CD8-positive, alpha-beta memory T cell (primary cell): ENCODE measurements at regions of chr5 and their contacts with region 1.

Region 1: GRCh38 chr5:65672796-65673195 is 48.0 kb downstream of the SHLD3 start:
- DNase-seq: no peak
- H3K4me3 ChIP-seq: no peak overlapping the region
- H3K4me3 Mint-ChIP-seq: no peak overlapping the region
- H3K27ac ChIP-seq: no peak overlapping the region
- H3K27ac Mint-ChIP-seq: peak overlapping the region in 5 of 8 donors; percentile 27 to 54 (median 39)
- H3K4me1 ChIP-seq: peaks cover 5% of the 10 kb centered on the region
- H3K4me1 Mint-ChIP-seq: peaks cover 19 to 23% (median 21%) of the 10 kb centered on the region in 3 donors
- H3K27me3 ChIP-seq: no peaks in the 10 kb centered on the region
- H3K27me3 Mint-ChIP-seq: no peaks in the 10 kb centered on the region

Region 2: GRCh38 chr5:65184780-65185179 is 488.0 kb before region 1 on chr5:
- CTCF ChIA-PET with region 1: no interaction called
- POLR2A ChIA-PET with region 1: no interaction called
- DNase-seq: no peak
- H3K4me3 ChIP-seq: no peak overlapping the region
- H3K4me3 Mint-ChIP-seq: no peak overlapping the region
- H3K27ac ChIP-seq: no peak overlapping the region
- H3K27ac Mint-ChIP-seq: no peak overlapping the region
- H3K4me1 ChIP-seq: no peaks in the 10 kb centered on the region
- H3K4me1 Mint-ChIP-seq: peaks cover 0 to 3% (median 0%) of the 10 kb centered on the region in 3 donors
- H3K27me3 ChIP-seq: no peaks in the 10 kb centered on the region
- H3K27me3 Mint-ChIP-seq: no peaks in the 10 kb centered on the region

Region 3: GRCh38 chr5:65651144-65651543 is 21.7 kb before region 1 on chr5:
- CTCF ChIA-PET with region 1: no interaction called
- POLR2A ChIA-PET with region 1: interaction called, 11 read pairs
- DNase-seq: no peak
- H3K4me3 ChIP-seq: no peak overlapping the region
- H3K4me3 Mint-ChIP-seq: no peak overlapping the region
- H3K27ac ChIP-seq: no peak overlapping the region
- H3K27ac Mint-ChIP-seq: no peak overlapping the region
- H3K4me1 ChIP-seq: no peaks in the 10 kb centered on the region
- H3K4me1 Mint-ChIP-seq: no peaks in the 10 kb centered on the region
- H3K27me3 ChIP-seq: no peaks in the 10 kb centered on the region
- H3K27me3 Mint-ChIP-seq: no peaks in the 10 kb centered on the region

Region 4: DNA sequence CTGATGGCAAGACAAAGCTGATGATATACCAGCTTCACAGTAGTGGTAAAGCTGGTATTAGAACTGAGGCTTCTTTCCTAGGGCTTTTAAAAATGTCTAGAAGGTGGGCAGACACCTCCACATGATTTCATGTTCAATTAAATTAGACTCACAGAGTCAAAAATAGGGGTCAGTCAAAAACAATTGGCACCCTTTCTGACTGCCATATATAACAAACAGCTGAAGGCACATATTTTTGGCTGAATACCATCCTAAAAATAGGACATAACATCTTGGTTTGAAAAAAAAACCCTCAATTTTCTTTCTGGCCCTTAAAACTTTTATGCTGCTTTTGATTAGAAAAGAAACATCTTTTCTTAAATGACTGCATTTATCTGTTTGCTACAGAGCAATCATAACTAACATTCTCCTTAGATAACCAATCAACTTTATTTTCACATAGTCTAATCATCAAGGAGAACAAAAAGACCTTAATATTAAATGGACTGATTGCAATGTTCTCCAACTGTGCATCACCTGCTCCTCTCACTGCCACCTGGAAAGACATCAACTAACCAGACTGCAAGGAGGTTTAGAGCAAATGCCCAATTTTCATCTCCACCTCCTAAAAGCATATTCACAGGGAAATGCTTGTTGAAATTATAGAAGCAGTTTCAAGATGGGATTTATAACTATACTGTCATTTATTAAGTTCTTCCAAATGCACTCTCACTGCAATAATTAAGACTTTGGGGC is 45.9 kb after region 1 on chr5:
- CTCF ChIA-PET with region 1: no interaction called
- POLR2A ChIA-PET with region 1: no interaction called
- DNase-seq: no peak
- H3K4me3 ChIP-seq: peak overlapping the region; percentile 45
- H3K4me3 Mint-ChIP-seq: peak overlapping the region in 6 of 7 donors; percentile 85 to 95 (median 90)
- H3K27ac ChIP-seq: peak overlapping the region; percentile 25
- H3K27ac Mint-ChIP-seq: peak overlapping the region in 4 of 8 donors; percentile 81 to 96 (median 94)
- H3K4me1 ChIP-seq: peaks cover 51% of the 10 kb centered on the region
- H3K4me1 Mint-ChIP-seq: peaks cover 22 to 23% (median 22%) of the 10 kb centered on the region in 3 donors
- H3K27me3 ChIP-seq: no peaks in the 10 kb centered on the region
- H3K27me3 Mint-ChIP-seq: no peaks in the 10 kb centered on the region